HEK293T (cell line): ENCODE measurements at regions of chr2 and their contacts with region 1.

Region 1: DNA sequence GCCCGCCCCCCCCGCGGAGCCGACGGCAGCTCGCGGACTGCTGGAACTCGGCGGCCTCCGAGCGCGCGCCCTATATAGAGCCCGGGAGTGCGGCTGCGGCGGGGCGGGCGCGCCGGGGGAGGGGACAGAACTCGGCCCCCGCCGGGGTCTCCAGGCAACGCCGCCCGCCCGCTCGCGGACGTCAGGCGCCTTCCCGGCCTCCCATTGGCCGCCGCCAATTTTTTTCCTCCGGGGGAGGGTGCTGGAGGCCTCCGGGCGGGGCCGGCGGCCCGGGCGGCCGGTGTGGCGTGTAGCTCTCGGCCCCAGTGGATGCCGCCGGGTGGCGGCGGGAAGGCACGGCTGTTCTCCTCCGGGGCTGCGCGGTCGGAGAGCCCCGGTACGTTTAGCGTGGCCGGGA is at the start of gene ZFP36L2:
- DNase-seq: peak; percentile 91

Region 2: GRCh38 chr2:42974721-42975717 is 251.5 kb before region 1 on chr2:
- CTCF ChIA-PET with region 1: interaction called, 4 read pairs
- POLR2A ChIA-PET with region 1: interaction called, 13 read pairs
- DNase-seq: peak; percentile 81

Region 3: GRCh38 chr2:43139996-43140621 is 86.4 kb before region 1 on chr2:
- CTCF ChIA-PET with region 1: interaction called, 7 read pairs
- POLR2A ChIA-PET with region 1: interaction called, 10 read pairs
- DNase-seq: no peak

Region 4: DNA sequence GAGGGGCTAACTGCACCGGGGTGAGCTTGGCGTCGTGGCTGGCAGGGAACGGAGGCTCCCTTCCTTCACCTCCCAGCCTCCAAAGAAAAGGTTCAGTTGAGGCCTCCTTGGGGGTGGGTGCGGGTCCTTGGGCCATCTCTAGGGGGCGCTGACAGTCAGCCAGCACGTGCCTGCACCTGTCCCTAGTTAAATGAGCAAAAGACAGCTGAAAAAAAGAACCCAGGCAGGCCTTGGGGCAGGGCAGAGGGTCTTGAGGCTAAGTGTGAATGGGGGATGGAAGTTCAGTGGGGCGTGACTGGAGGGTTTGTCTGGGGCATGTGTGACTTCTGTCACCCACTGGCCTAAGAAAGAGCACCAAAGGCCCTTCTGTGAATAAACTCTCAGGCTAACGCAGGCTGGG is 56.6 kb before region 1 on chr2:
- CTCF ChIA-PET with region 1: interaction called, 10 read pairs
- POLR2A ChIA-PET with region 1: interaction called, 16 read pairs
- DNase-seq: peak; percentile 78

Region 5: DNA sequence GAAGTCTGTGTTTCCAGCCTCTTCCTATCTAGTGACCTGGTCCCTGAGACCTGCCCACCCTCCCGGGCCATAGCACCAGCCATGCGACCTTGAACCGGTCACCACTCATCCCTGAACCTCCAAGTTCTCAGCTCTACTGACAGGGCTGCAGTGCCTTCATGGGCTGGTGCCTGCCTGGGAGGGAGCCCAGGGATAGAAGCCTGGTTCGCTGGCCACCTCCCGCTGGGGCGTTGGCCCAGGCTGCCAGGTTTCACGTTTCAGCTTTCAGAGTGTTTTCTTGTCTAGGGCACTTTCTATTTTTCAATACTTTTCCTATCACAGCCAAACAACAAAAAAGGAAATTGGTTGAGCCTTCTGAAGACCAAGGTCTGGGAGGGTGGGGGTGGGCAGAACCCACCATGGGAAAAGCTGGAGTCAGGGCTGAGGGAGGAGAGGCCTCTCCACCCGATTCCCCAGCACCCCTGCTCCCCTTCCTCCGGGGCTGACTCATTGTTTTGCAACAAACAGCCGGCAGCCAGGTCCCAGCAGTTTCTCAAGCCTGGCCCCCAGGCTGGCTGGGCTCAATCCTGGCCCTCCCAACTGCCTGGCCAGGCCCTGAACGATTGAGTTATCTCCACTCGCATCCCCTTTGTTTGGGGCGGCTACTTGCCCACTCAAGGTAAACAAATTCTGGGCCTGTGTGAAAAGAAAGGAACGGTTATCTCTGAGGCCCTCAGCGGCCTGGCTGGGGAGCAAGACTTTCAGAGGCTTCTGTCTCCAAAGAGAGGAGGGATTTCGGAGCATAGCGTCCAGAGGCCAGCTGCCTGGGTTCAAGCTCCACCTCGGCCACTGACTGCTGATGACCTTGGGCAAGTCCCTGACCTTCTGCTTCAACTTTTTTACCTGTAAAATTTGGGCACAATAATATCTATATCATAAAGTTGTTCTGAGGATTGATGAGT is 47.7 kb before region 1 on chr2:
- CTCF ChIA-PET with region 1: interaction called, 5 read pairs
- POLR2A ChIA-PET with region 1: interaction called, 16 read pairs
- DNase-seq: peak; percentile 54

Region 6: DNA sequence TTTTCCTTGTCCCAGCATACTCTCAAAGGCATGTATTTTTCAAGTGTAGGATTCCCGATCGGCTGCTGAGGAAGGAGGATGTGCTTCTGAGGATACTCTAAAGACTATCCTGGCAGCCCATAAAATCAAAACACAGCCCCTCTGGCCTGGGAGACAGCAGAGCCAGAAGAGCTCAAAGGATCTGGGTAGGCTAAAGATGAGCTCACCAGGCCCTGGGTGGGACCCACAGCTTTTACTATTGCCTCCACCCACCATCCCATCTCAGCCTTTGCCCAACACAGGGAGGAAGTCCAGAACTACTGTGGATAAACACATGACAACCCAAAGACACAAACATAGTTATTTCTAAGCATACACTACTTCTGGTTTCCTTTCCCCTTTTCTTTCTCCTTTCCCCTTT is 79.0 kb after region 1 on chr2:
- CTCF ChIA-PET with region 1: no interaction called
- POLR2A ChIA-PET with region 1: no interaction called
- DNase-seq: no peak

Region 7: GRCh38 chr2:43484323-43484930 is 257.9 kb after region 1 on chr2:
- CTCF ChIA-PET with region 1: interaction called, 13 read pairs
- POLR2A ChIA-PET with region 1: interaction called, 5 read pairs
- DNase-seq: peak; percentile 14